Activated CD4-positive, alpha-beta T cell treated with anti-CD3 and anti-CD28 coated beads for 36 hours (primary cell): ENCODE measurements at regions of chr4 and their contacts with region 1.

Region 1: GRCh38 chr4:79042079-79042674 is 102.9 kb upstream of the PAQR3 start:
- DNase-seq: peak; percentile 6
- ATAC-seq: no peak
- H3K4me3 Mint-ChIP-seq: no peak overlapping the region
- H3K27ac Mint-ChIP-seq: no peak overlapping the region
- H3K4me1 Mint-ChIP-seq: no peaks in the 10 kb centered on the region
- H3K27me3 Mint-ChIP-seq: peaks cover 2% of the 10 kb centered on the region

Region 2: GRCh38 chr4:79198951-79199587 is 156.9 kb after region 1 on chr4:
- CTCF ChIA-PET with region 1: no interaction called
- POLR2A ChIA-PET with region 1: no interaction called
- intact Hi-C with region 1: no loop called
- DNase-seq: no peak
- ATAC-seq: no peak
- H3K4me3 Mint-ChIP-seq: no peak overlapping the region
- H3K27ac Mint-ChIP-seq: no peak overlapping the region
- H3K4me1 Mint-ChIP-seq: no peaks in the 10 kb centered on the region
- H3K27me3 Mint-ChIP-seq: peaks cover 6% of the 10 kb centered on the region

Region 3: GRCh38 chr4:79421483-79421882 is 379.3 kb after region 1 on chr4:
- CTCF ChIA-PET with region 1: no interaction called
- POLR2A ChIA-PET with region 1: no interaction called
- intact Hi-C with region 1: no loop called
- DNase-seq: no peak
- ATAC-seq: no peak
- H3K4me3 Mint-ChIP-seq: no peak overlapping the region
- H3K27ac Mint-ChIP-seq: no peak overlapping the region
- H3K4me1 Mint-ChIP-seq: no peaks in the 10 kb centered on the region
- H3K27me3 Mint-ChIP-seq: no peaks in the 10 kb centered on the region

Region 4: DNA sequence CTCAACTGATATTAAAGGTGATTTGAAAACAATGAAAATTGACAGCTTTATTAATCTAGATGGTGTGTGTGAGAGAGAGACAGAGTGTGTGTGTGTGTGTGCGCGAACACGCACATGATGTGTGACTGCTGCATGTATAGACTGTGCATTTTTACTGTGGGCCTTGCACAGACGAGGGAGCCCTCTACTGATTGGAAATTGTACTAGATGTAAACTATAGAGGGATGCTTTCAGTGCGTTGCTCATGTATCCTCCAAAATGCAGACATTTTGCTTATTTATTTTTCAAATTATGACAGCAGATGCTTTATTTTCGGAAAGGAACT is 534.2 kb after region 1 on chr4:
- CTCF ChIA-PET with region 1: no interaction called
- POLR2A ChIA-PET with region 1: no interaction called
- intact Hi-C with region 1: loop called in 1 of 2 experiments (anchors 1 kb)
- DNase-seq: peak; percentile 21
- ATAC-seq: peak; percentile 53
- H3K4me3 Mint-ChIP-seq: no peak overlapping the region
- H3K27ac Mint-ChIP-seq: no peak overlapping the region
- H3K4me1 Mint-ChIP-seq: no peaks in the 10 kb centered on the region
- H3K27me3 Mint-ChIP-seq: no peaks in the 10 kb centered on the region